ENCODE measurements at regions of chr19 and their contacts with region 1.

Region 1: DNA sequence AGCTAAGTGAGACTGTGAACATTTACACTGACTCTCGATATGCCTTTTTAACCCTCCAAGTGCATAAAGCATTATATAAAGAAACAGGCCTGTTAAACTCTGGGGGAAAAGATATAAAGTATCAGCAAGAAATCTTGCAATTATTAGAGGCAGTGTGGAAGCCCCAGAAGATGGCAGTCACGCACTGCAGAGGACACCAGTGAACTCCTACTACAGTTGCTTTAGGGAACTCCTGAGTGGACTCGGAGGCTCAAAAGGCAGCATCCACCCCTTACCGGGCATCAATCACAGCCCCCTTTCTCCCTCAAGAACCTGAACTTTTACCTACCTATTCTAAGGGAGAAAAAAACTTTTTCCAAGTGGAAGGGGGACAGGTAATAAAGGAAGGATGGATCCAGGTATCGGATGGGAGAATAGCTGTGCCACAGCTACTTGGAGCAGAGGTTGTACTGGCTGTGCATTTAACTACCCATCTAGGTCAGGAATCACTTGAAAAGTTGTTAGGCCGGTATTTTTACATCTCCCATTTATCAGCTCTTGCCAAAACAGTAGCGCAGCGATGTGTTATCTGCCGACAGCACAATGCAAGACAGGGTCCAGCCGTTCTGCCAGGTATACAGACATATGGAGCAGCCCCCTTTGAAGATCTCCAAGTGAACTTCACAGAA is 80.1 kb downstream of the ZNF486 start:
- DNase-seq: peak in 13 of 14 experiments; percentile 11 to 58 (median 27)
- ATAC-seq: no peak
- H3K4me3 ChIP-seq: no peak overlapping the region
- H3K4me3 Mint-ChIP-seq: no peak overlapping the region
- H3K27ac ChIP-seq: no peak overlapping the region
- H3K27ac Mint-ChIP-seq: no peak overlapping the region
- H3K4me1 ChIP-seq: peaks cover 5% of the 10 kb centered on the region
- H3K4me1 Mint-ChIP-seq: peaks cover 5% of the 10 kb centered on the region
- H3K27me3 ChIP-seq: no peaks in the 10 kb centered on the region
- H3K27me3 Mint-ChIP-seq: no peaks in the 10 kb centered on the region
- CTCF ChIP-seq: peak; percentile 50

Region 2: GRCh38 chr19:20151617-20152145 is 95.5 kb before region 1 on chr19:
- CTCF ChIA-PET with region 1: no interaction called
- POLR2A ChIA-PET with region 1: no interaction called
- intact Hi-C with region 1: no loop called
- DNase-seq: no peak
- ATAC-seq: no peak
- H3K4me3 ChIP-seq: no peak overlapping the region
- H3K4me3 Mint-ChIP-seq: no peak overlapping the region
- H3K27ac ChIP-seq: no peak overlapping the region
- H3K27ac Mint-ChIP-seq: no peak overlapping the region
- H3K4me1 ChIP-seq: no peaks in the 10 kb centered on the region
- H3K4me1 Mint-ChIP-seq: no peaks in the 10 kb centered on the region
- H3K27me3 ChIP-seq: no peaks in the 10 kb centered on the region
- H3K27me3 Mint-ChIP-seq: no peaks in the 10 kb centered on the region
- CTCF ChIP-seq: no peak

Region 3: DNA sequence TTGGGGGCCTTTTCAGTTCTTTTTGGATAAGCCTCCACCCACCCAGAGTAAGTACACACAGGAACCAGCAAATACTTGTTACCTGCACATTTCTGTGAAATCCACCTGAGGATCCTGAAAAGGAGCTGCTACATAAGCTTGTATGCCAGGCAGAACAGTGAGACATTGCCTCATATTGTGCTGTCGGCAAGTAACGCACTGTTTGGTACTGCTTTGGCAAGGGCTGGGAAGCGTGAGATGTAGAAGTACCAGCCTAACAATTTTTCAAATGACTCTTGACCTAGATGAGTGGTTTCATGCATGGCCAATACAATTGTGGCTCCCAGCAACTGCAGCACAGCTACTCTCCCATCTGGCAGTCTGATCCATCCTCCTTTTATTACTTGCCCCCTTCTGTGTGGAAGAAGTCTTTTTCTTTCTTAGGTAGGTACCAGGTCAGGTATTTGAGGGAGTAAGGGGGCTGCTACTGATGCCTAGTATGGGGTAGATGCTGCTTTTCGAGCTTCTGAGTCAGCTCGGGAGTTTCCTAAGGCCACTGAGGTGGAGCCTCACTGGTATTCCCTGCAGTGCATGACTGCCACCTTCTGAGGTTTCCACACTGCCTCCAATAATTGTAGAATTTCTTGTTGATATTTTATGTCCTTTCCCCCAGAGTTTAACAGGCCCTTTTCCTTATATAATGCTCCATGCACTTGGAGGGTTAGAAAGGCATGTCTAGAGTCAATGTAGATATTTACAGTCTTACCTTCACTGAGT is 266.2 kb after region 1 on chr19:
- CTCF ChIA-PET with region 1: no interaction called
- POLR2A ChIA-PET with region 1: no interaction called
- intact Hi-C with region 1: loop called in 1 of 2 experiments (anchors 10 kb)
- DNase-seq: peak in 4 of 14 experiments; percentile 18 to 23 (median 20)
- ATAC-seq: no peak
- H3K4me3 ChIP-seq: no peak overlapping the region
- H3K4me3 Mint-ChIP-seq: no peak overlapping the region
- H3K27ac ChIP-seq: no peak overlapping the region
- H3K27ac Mint-ChIP-seq: no peak overlapping the region
- H3K4me1 ChIP-seq: no peaks in the 10 kb centered on the region
- H3K4me1 Mint-ChIP-seq: no peaks in the 10 kb centered on the region
- H3K27me3 ChIP-seq: no peaks in the 10 kb centered on the region
- H3K27me3 Mint-ChIP-seq: no peaks in the 10 kb centered on the region
- CTCF ChIP-seq: no peak

Region 4: DNA sequence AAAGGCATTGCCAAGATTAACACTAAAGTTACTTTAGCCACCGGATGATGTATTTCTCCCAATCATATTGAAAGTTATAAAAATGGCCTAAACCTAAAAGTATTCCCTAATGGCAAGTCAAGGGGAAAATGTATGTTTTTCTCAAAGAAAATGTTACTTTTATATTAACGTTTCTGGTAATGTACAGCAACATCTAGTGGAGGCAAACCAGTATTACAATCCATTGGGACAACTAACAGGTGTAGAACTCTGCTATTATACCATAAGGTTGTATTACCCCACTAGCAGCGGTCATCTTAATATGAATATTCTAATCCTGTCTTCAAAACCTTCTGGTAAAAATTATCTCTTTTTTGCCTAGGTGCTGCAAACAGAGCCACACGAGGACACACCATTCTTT is 1451.1 kb after region 1 on chr19:
- CTCF ChIA-PET with region 1: no interaction called
- POLR2A ChIA-PET with region 1: no interaction called
- intact Hi-C with region 1: loop called (anchors 2 to 5 kb)
- DNase-seq: peak in 4 of 14 experiments; percentile 5 to 61 (median 42)
- ATAC-seq: peak; percentile 66
- H3K4me3 ChIP-seq: no peak overlapping the region
- H3K4me3 Mint-ChIP-seq: no peak overlapping the region
- H3K27ac ChIP-seq: no peak overlapping the region
- H3K27ac Mint-ChIP-seq: no peak overlapping the region
- H3K4me1 ChIP-seq: no peaks in the 10 kb centered on the region
- H3K4me1 Mint-ChIP-seq: no peaks in the 10 kb centered on the region
- H3K27me3 ChIP-seq: no peaks in the 10 kb centered on the region
- H3K27me3 Mint-ChIP-seq: no peaks in the 10 kb centered on the region
- CTCF ChIP-seq: peak; percentile 76

Region 5: GRCh38 chr19:21891081-21891480 is 1643.9 kb after region 1 on chr19:
- CTCF ChIA-PET with region 1: no interaction called
- POLR2A ChIA-PET with region 1: no interaction called
- intact Hi-C with region 1: loop called in 1 of 2 experiments (anchors 2 kb)
- DNase-seq: no peak
- ATAC-seq: no peak
- H3K4me3 ChIP-seq: no peak overlapping the region
- H3K4me3 Mint-ChIP-seq: no peak overlapping the region
- H3K27ac ChIP-seq: no peak overlapping the region
- H3K27ac Mint-ChIP-seq: no peak overlapping the region
- H3K4me1 ChIP-seq: no peaks in the 10 kb centered on the region
- H3K4me1 Mint-ChIP-seq: no peaks in the 10 kb centered on the region
- H3K27me3 ChIP-seq: no peaks in the 10 kb centered on the region
- H3K27me3 Mint-ChIP-seq: no peaks in the 10 kb centered on the region
- CTCF ChIP-seq: no peak

Measured in CD4-positive, alpha-beta T cell (primary cell).